ENCODE measurements at regions of chr5 and their contacts with region 1.

Region 1: DNA sequence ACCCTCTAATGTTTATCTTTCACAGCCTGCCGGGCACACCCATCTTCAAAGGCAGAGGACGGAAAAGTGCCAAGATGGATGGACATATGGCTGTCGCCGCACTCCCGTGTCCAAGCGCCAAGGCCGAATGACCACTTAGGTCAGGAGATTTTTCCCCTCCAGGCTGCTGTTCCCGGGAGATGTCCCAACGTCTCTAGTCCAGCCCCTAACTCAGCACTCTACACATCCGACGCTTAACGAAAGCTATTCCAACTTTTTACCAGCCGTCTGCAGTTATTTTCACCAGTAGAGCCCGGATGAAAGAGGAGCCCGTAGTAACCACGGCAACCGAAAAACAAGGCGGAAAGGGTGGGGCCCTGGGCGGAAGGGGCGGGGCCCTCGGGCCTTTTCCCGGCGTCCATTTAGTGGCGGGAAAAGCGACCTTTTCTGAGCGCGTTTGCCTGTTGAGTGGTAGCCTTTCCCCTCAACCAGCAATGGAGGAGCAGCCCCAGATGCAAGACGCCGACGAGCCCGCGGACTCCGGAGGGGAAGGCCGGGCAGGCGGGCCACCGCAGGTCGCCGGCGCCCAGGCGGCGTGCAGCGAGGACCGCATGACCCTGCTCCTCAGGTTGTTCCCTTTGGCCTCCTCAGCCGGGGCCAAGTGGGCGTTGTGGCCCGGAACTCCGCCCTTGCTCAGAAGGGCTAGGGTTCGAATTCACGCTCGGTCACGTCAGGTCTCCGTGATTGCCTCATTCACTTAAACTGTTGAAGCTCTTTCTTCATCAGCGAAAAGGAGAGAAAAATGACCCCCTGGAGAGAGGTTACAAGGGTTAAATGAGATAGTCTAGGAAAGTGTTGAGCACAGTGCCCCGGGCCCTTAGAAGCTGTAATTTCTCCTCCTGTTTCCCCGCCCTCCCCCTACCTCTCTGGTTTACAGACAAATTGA is at the start of gene CENPH:
- DNase-seq: peak; percentile 88
- ATAC-seq: peak; percentile 94
- H3K4me3 ChIP-seq: peak within 1 kb of the TSS; percentile 59
- H3K27ac ChIP-seq: peak within 1 kb of the TSS; percentile 79
- H3K4me1 ChIP-seq: no peaks in the 10 kb centered on the region
- H3K27me3 ChIP-seq: no peaks in the 10 kb centered on the region
- CTCF ChIP-seq: no peak
- POLR2A ChIP-seq: peak; percentile 80
- RAD21 ChIP-seq: no peak
- total RNA-seq, gene CENPH: 3.8 and 10.8 TPM in 2 replicates

Region 2: GRCh38 chr5:69042915-69043658 is 146.3 kb before region 1 on chr5:
- CTCF ChIA-PET with region 1: no interaction called
- POLR2A ChIA-PET with region 1: no interaction called
- dilution Hi-C with region 1: no loop called
- in situ Hi-C with region 1: no loop called
- intact Hi-C with region 1: no loop called
- DNase-seq: peak; percentile 93
- ATAC-seq: peak; percentile 96
- H3K4me3 ChIP-seq: peak overlapping the region; percentile 53
- H3K27ac ChIP-seq: peak overlapping the region; percentile 28; the same call in 1 of the 2 replicates
- H3K4me1 ChIP-seq: no peaks in the 10 kb centered on the region
- H3K27me3 ChIP-seq: no peaks in the 10 kb centered on the region; the same call in 1 of the 2 replicates
- CTCF ChIP-seq: peak; percentile 90
- POLR2A ChIP-seq: no peak
- RAD21 ChIP-seq: peak; percentile 88

Region 3: GRCh38 chr5:69113851-69114250 is 75.6 kb before region 1 on chr5:
- CTCF ChIA-PET with region 1: no interaction called
- POLR2A ChIA-PET with region 1: interaction called, 24 read pairs
- dilution Hi-C with region 1: no loop called
- in situ Hi-C with region 1: no loop called
- intact Hi-C with region 1: no loop called
- DNase-seq: no peak
- ATAC-seq: no peak
- H3K4me3 ChIP-seq: no peak overlapping the region
- H3K27ac ChIP-seq: no peak overlapping the region
- H3K4me1 ChIP-seq: no peaks in the 10 kb centered on the region
- H3K27me3 ChIP-seq: no peaks in the 10 kb centered on the region
- CTCF ChIP-seq: no peak
- POLR2A ChIP-seq: no peak
- RAD21 ChIP-seq: no peak